Esophagus muscularis mucosa (tissue), 4 donors: ENCODE measurements at regions of chr15 and their contacts with region 1.

Region 1: GRCh38 chr15:57203906-57204305 is 172.4 kb upstream of the CGNL1 start:
- DNase-seq: no peak
- H3K4me3 ChIP-seq: no peak overlapping the region
- H3K27ac ChIP-seq: no peak overlapping the region
- H3K4me1 ChIP-seq: peaks cover 7 to 12% (median 10%) of the 10 kb centered on the region in 4 donors
- H3K27me3 ChIP-seq: no peaks in the 10 kb centered on the region
- CTCF ChIP-seq: no peak
- EP300 ChIP-seq: no peak
- POLR2A ChIP-seq: no peak

Region 2: DNA sequence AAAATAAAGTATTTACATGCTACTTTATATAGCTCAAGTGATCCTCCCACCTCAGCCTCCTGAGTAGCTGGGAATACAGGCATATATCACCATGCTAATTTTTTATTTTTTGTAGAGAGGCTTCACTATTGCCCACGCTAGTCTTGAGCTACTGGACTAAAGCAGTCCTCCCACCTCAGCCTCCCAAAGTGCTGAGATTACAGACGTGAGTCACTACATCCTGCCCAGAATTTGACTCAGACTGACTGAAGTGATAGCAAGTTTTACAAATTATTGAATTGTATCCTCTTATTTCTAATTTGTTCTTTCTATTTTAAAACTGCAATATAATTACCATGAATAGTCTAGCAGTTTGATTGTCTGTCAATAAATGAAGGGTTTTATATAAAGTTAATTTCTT is 37.9 kb before region 1 on chr15:
- intact Hi-C with region 1: loop called (anchors 5 kb)
- DNase-seq: no peak
- H3K4me3 ChIP-seq: no peak overlapping the region
- H3K27ac ChIP-seq: no peak overlapping the region
- H3K4me1 ChIP-seq: no peaks in the 10 kb centered on the region
- H3K27me3 ChIP-seq: no peaks in the 10 kb centered on the region
- CTCF ChIP-seq: no peak
- EP300 ChIP-seq: no peak
- POLR2A ChIP-seq: no peak